B cell (primary cell): ENCODE measurements at regions of chr16 and their contacts with region 1.

Region 1: GRCh38 chr16:30091474-30092372 is at the start of gene TBX6:
- DNase-seq: peak; percentile 95
- ATAC-seq: peak; percentile 74
- H3K4me3 ChIP-seq: peak within 1 kb of the TSS; percentile 52 to 77 (median 70)
- H3K4me3 Mint-ChIP-seq: peak within 1 kb of the TSS; percentile 92
- H3K27ac ChIP-seq: peak within 1 kb of the TSS; percentile 87 to 92
- H3K27ac Mint-ChIP-seq: peak within 1 kb of the TSS; percentile 98
- H3K4me1 ChIP-seq: peaks cover 33 to 62% of the 10 kb centered on the region in 2 donors
- H3K4me1 Mint-ChIP-seq: peaks cover 53% of the 10 kb centered on the region
- H3K27me3 ChIP-seq: no peaks in the 10 kb centered on the region
- H3K27me3 Mint-ChIP-seq: no peaks in the 10 kb centered on the region
- CTCF ChIP-seq: peak; percentile 76
- total RNA-seq, gene TBX6: 5.4 and 6.1 TPM in 2 replicates

Region 2: GRCh38 chr16:29815793-29816693 is 275.7 kb before region 1 on chr16 and contains the start of gene PAGR1:
- CTCF ChIA-PET with region 1: no interaction called
- POLR2A ChIA-PET with region 1: no interaction called
- intact Hi-C with region 1: no loop called
- DNase-seq: peak; percentile 100
- ATAC-seq: peak; percentile 76
- H3K4me3 ChIP-seq: peak within 1 kb of the TSS; percentile 73 to 93 (median 84)
- H3K4me3 Mint-ChIP-seq: peak within 1 kb of the TSS; percentile 97
- H3K27ac ChIP-seq: peak within 1 kb of the TSS; percentile 88
- H3K27ac Mint-ChIP-seq: peak within 1 kb of the TSS; percentile 98
- H3K4me1 ChIP-seq: peaks cover 40 to 60% of the 10 kb centered on the region in 2 donors
- H3K4me1 Mint-ChIP-seq: peaks cover 65% of the 10 kb centered on the region
- H3K27me3 ChIP-seq: peaks cover 0 to 13% (median 5%) of the 10 kb centered on the region in 4 experiments
- H3K27me3 Mint-ChIP-seq: no peaks in the 10 kb centered on the region
- CTCF ChIP-seq: peak; percentile 97
- total RNA-seq, gene PAGR1: 26.7 and 28.4 TPM in 2 replicates

Region 3: GRCh38 chr16:29862884-29863668 is 228.6 kb before region 1 on chr16 and contains the start of gene CDIPT:
- CTCF ChIA-PET with region 1: no interaction called
- POLR2A ChIA-PET with region 1: no interaction called
- intact Hi-C with region 1: loop called (anchors 1 kb)
- DNase-seq: peak; percentile 98
- ATAC-seq: peak; percentile 97
- H3K4me3 ChIP-seq: peak within 1 kb of the TSS; percentile 67 to 92 (median 81)
- H3K4me3 Mint-ChIP-seq: peak within 1 kb of the TSS; percentile 96
- H3K27ac ChIP-seq: peak within 1 kb of the TSS; percentile 96 to 97
- H3K27ac Mint-ChIP-seq: peak within 1 kb of the TSS; percentile 99
- H3K4me1 ChIP-seq: peaks cover 14 to 19% of the 10 kb centered on the region in 2 donors
- H3K4me1 Mint-ChIP-seq: peaks cover 21% of the 10 kb centered on the region
- H3K27me3 ChIP-seq: no peaks in the 10 kb centered on the region
- H3K27me3 Mint-ChIP-seq: no peaks in the 10 kb centered on the region
- CTCF ChIP-seq: peak; percentile 55
- total RNA-seq, gene CDIPT: 49.2 and 51.2 TPM in 2 replicates

Region 4: DNA sequence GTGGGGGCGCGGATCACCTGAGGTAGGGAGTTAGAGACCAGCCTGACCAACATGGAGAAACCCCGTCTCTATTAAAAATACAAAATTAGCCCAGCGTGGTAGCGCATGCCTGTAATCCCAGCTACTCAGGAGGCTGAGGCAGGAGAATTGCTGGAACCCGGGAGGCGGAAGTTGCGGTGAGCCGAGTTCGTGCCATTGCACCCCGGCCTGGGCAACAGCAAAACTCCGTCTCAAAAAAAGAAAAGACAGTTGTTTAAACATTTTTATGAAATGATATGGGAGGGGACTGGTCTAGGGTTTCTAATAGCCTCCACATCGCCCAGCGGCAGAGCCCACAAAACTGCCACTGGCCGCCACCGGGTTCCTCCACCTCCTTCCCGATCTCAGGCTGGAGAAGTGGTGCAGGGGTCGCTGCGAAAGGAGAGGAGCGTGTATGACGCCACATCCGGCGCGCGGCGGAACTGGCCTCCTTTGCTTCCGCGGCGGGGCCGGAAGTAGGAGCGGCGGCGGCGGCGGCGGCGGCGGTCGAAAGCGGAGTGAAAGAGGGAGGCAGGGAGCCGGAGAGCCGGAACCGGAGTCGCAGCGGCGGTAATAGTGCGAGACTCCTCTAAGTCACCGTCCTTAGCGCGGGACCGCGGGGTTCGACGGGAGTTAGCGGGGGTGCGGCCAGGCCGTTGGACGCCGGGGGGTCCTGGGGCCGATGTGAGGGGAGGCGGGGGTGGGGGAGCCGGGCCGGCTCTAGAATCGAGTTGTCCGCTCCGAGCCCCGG is 16.0 kb before region 1 on chr16 and contains the start of gene PPP4C:
- CTCF ChIA-PET with region 1: interaction called, 20 read pairs
- POLR2A ChIA-PET with region 1: interaction called, 9 read pairs
- intact Hi-C with region 1: loop called (anchors 1 kb)
- DNase-seq: peak; percentile 93
- ATAC-seq: peak; percentile 89
- H3K4me3 ChIP-seq: peak within 1 kb of the TSS; percentile 65 to 98 (median 90)
- H3K4me3 Mint-ChIP-seq: peak within 1 kb of the TSS; percentile 98
- H3K27ac ChIP-seq: peak within 1 kb of the TSS; percentile 67 to 90
- H3K27ac Mint-ChIP-seq: peak within 1 kb of the TSS; percentile 98
- H3K4me1 ChIP-seq: peaks cover 14 to 25% of the 10 kb centered on the region in 2 donors
- H3K4me1 Mint-ChIP-seq: peaks cover 31% of the 10 kb centered on the region
- H3K27me3 ChIP-seq: no peaks in the 10 kb centered on the region
- H3K27me3 Mint-ChIP-seq: no peaks in the 10 kb centered on the region
- CTCF ChIP-seq: no peak
- total RNA-seq, gene PPP4C: 89.0 and 93.3 TPM in 2 replicates

Region 5: DNA sequence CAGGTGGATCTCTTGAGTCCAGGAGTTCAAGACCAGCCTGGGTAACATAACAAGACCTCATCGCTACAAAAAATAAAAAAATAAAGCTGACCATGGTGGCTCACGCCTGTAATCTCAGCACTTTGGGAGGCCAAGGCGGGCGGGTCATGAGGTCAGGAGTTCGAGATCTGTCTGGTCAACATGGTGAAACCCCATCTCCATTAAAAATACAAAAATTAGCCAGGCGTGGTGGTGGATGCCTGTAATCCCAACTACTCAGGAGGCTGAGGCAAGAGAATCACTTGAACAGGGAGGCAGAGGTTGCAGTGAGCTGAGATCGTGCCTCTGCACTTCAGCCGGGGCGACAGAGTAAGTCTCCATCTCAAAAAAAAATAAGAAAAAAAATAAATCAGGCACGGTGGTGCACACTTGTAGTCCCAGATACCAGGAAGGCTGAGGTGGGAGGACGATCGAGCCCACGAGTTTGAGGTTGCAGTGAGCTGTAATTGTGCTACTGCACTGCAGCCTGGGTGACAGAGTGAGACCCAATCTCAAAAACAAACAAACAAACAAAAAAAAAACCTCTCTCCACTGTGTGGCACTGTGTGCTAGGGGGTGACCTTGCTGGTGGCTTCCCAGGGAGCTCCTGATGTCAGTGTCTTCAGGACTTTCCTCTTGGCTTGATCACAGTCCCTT is 51.1 kb after region 1 on chr16:
- CTCF ChIA-PET with region 1: interaction called, 23 read pairs
- POLR2A ChIA-PET with region 1: interaction called, 8 read pairs
- intact Hi-C with region 1: loop called (anchors 1 kb)
- DNase-seq: peak; percentile 57
- ATAC-seq: peak; percentile 60
- H3K4me3 ChIP-seq: no peak overlapping the region
- H3K4me3 Mint-ChIP-seq: no peak overlapping the region
- H3K27ac ChIP-seq: no peak overlapping the region
- H3K27ac Mint-ChIP-seq: no peak overlapping the region
- H3K4me1 ChIP-seq: peaks cover 6 to 13% of the 10 kb centered on the region in 2 donors
- H3K4me1 Mint-ChIP-seq: peaks cover 9% of the 10 kb centered on the region
- H3K27me3 ChIP-seq: no peaks in the 10 kb centered on the region
- H3K27me3 Mint-ChIP-seq: no peaks in the 10 kb centered on the region
- CTCF ChIP-seq: peak; percentile 40

Region 6: DNA sequence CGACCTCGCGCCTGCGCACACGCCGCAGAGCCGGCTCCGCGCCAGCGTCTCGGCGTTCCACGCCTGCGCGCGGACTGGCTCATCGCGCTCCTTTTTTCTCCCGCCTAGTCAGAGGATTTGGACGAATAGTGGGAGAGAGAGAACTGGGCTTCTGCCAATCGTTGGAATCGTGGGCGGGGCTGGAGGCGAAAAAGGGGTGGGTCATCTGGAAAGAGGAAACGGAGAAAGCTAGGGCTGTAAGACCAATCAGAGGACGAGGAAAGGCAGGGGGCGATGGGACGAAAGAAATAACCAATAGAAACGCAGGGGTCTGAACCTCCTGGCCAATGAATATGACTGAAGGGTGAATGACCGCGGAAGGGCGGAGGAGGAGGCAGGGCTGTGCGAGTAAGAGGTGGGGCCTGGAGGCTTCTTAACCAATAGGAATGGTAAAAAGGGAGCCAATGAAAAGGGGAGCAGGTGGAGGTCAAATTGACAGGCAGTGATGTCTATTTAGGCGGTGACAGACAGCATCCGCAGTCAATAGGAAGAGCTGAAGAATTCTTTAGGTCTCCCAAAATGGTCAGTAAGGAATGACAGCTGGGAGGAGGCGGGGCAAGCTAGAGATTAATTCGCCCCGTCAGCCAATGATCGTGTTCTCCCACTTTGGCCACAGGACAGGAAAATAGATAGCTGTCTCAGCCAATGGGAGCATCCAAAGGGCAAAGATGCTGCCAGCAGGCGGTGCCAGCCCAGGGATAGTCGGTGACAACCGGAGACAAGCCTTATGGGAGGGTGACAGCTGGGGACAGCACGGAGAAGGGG is 278.9 kb after region 1 on chr16 and contains the start of gene TBC1D10B:
- CTCF ChIA-PET with region 1: interaction called, 4 read pairs
- POLR2A ChIA-PET with region 1: interaction called, 5 read pairs
- intact Hi-C with region 1: loop called (anchors 10 kb)
- DNase-seq: peak; percentile 99
- ATAC-seq: peak; percentile 82
- H3K4me3 ChIP-seq: peak within 1 kb of the TSS; percentile 47 to 77 (median 70)
- H3K4me3 Mint-ChIP-seq: peak within 1 kb of the TSS; percentile 86
- H3K27ac ChIP-seq: peak within 1 kb of the TSS; percentile 60 to 71
- H3K27ac Mint-ChIP-seq: peak within 1 kb of the TSS; percentile 90
- H3K4me1 ChIP-seq: peaks cover 25 to 35% of the 10 kb centered on the region in 2 donors
- H3K4me1 Mint-ChIP-seq: peaks cover 49% of the 10 kb centered on the region
- H3K27me3 ChIP-seq: no peaks in the 10 kb centered on the region
- H3K27me3 Mint-ChIP-seq: no peaks in the 10 kb centered on the region
- CTCF ChIP-seq: peak; percentile 26
- total RNA-seq, gene TBC1D10B: 53.0 and 58.0 TPM in 2 replicates

Region 7: DNA sequence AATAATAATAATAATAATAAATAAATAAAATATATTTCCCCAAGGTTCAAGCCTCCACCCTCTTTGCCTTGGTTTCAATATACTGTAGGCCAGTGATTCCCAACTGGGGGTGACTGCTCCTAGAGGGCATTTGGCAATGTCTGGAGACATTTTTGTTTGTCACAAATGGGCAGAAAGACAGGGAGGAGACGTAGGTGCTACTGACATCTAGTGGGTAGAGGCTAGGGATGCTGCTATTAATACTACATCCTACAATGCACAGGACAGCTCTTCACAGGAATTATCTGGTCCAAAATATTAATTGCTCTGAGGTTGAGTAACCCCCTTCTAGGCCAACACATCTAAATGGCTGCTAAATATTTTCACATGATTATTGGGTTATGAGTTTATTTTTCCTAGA is 546.2 kb after region 1 on chr16:
- CTCF ChIA-PET with region 1: interaction called, 3 read pairs
- POLR2A ChIA-PET with region 1: no interaction called
- intact Hi-C with region 1: loop called (anchors 10 kb)
- DNase-seq: peak; percentile 56
- ATAC-seq: no peak
- H3K4me3 ChIP-seq: no peak overlapping the region
- H3K4me3 Mint-ChIP-seq: no peak overlapping the region
- H3K27ac ChIP-seq: no peak overlapping the region
- H3K27ac Mint-ChIP-seq: no peak overlapping the region
- H3K4me1 ChIP-seq: peaks cover 7 to 18% of the 10 kb centered on the region in 2 donors
- H3K4me1 Mint-ChIP-seq: peaks cover 16% of the 10 kb centered on the region
- H3K27me3 ChIP-seq: no peaks in the 10 kb centered on the region
- H3K27me3 Mint-ChIP-seq: no peaks in the 10 kb centered on the region
- CTCF ChIP-seq: peak; percentile 36